ENCODE measurements at regions of chr3 and their contacts with region 1.

Region 1: GRCh38 chr3:194486540-194487288 is at the start of gene ATP13A3:
- DNase-seq: peak; percentile 87
- H3K4me3 Mint-ChIP-seq: peak within 1 kb of the TSS; percentile 89
- H3K27ac Mint-ChIP-seq: peak within 1 kb of the TSS; percentile 89
- H3K4me1 Mint-ChIP-seq: peaks cover 51% of the 10 kb centered on the region
- H3K27me3 Mint-ChIP-seq: no peaks in the 10 kb centered on the region
- total RNA-seq, gene ATP13A3: 136 and 150 TPM in 2 replicates

Region 2: GRCh38 chr3:194521514-194522260 is 35.0 kb after region 1 on chr3:
- intact Hi-C with region 1: loop called (anchors 1 kb)
- DNase-seq: no peak
- H3K4me3 Mint-ChIP-seq: no peak overlapping the region
- H3K27ac Mint-ChIP-seq: no peak overlapping the region
- H3K4me1 Mint-ChIP-seq: peaks cover 27% of the 10 kb centered on the region
- H3K27me3 Mint-ChIP-seq: no peaks in the 10 kb centered on the region

Region 3: DNA sequence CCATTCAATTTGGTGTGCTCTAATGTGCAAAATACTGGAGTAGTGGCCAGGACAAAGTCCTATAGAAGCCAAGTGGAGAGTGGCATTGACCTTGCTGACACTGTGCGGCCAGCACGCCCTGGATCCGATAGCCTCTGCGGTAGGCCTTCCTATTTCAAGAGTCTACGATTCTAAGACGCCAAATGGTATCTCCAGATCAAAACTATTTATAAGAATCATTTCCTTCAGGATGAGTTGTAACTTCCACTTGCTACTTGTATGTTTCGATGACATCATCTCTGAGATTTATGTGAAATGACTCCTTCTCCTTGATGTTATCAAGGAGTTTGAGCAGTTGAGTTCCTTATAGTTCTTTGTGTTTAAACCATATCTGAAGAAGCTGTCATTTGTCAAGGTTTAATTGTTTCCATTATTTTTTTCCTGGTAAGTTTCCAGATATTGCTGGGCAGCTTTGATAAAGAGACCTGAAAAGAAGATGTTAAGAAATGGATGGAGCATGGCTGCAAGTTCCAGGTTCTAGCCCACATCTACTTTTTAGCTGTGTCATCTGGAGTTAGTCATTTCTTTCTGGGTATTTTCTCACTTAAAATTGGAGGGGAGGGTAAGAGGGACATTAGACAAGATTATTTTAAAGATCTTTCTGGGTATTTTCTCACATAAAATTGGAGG is 74.7 kb after region 1 on chr3:
- intact Hi-C with region 1: loop called (anchors 2 kb)
- DNase-seq: no peak
- H3K4me3 Mint-ChIP-seq: no peak overlapping the region
- H3K27ac Mint-ChIP-seq: peak overlapping the region; percentile 40
- H3K4me1 Mint-ChIP-seq: peaks cover 19% of the 10 kb centered on the region
- H3K27me3 Mint-ChIP-seq: peaks cover 18% of the 10 kb centered on the region

Region 4: GRCh38 chr3:195087328-195087727 is 600.6 kb after region 1 on chr3:
- intact Hi-C with region 1: no loop called
- DNase-seq: no peak
- H3K4me3 Mint-ChIP-seq: no peak overlapping the region
- H3K27ac Mint-ChIP-seq: no peak overlapping the region
- H3K4me1 Mint-ChIP-seq: no peaks in the 10 kb centered on the region
- H3K27me3 Mint-ChIP-seq: peaks cover 5% of the 10 kb centered on the region

Measured in activated T-helper 2 cell treated with anti-CD3 and anti-CD28 coated beads, Interferon-gamma antibody, Interleukin-2, Interleukin-4, amounts not matched to agents 10 μg/mL and 5 μg/mL and 100 μg/mL, durations not matched to agents 14 hours and 24 hours and 36 hours (primary cell).